MCF 10A (cell line): ENCODE measurements at regions of chr1 and their contacts with region 1.

Region 1: DNA sequence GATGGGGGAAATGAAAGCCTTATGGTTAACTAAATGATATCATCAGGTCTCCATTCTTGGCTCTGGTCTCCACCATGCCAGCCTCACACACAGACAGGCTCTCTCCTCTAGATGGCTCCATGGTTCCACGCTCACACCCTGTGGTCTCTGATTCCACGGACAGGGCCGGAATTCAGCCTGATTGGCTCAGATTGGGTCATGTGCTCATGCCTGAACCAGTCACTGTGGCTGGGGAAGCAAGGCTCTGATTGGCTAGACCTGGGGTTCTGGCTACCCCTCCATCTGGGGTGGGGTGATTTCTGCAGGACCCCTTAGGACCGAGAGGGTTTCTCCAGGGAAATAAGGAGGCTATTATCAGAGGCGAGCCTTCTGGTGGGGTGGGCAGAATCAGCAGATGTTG is 277.0 kb downstream of the PTPRU start:
- DNase-seq: peak; percentile 78
- H3K4me3 Mint-ChIP-seq: no peak overlapping the region
- H3K27ac Mint-ChIP-seq: no peak overlapping the region
- H3K4me1 Mint-ChIP-seq: no peaks in the 10 kb centered on the region
- H3K27me3 Mint-ChIP-seq: peaks cover 57% of the 10 kb centered on the region
- CTCF ChIP-seq: peak; percentile 86

Region 2: DNA sequence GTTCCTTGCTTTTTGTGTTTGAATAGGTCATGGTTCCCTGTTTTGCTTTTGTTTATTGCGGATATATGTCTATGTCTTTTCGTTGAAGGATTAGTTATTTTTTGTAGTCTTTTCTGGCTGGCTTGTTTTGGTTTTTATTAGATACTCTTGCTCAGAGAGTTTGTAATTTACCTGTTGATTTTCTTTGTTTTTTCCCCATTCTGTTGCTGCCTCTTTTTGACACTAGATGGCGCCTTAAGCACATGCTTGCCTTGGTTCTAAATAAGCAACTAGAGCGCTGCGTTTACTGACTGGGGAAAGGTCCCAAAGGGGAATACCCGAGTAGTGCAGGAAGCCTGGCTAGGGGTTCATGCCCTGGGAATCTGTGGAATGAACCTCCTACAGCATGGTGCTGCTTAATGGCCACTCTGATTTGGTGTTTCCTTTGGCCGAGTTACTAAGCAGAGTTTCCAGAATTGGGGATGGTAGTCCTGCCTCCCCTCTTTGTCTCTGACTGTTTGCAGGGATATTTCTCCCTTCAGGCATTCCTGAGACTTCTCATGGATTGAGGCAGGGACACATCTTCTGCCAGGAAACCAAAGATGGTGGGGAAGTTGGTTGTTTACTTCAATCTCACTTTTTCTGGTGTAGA is 133.8 kb before region 1 on chr1:
- CTCF ChIA-PET with region 1: no interaction called
- POLR2A ChIA-PET with region 1: no interaction called
- intact Hi-C with region 1: loop called (anchors 2 kb)
- DNase-seq: peak; percentile 44
- H3K4me3 Mint-ChIP-seq: no peak overlapping the region
- H3K27ac Mint-ChIP-seq: no peak overlapping the region
- H3K4me1 Mint-ChIP-seq: no peaks in the 10 kb centered on the region
- H3K27me3 Mint-ChIP-seq: peaks cover 29% of the 10 kb centered on the region
- CTCF ChIP-seq: peak; percentile 63

Region 3: DNA sequence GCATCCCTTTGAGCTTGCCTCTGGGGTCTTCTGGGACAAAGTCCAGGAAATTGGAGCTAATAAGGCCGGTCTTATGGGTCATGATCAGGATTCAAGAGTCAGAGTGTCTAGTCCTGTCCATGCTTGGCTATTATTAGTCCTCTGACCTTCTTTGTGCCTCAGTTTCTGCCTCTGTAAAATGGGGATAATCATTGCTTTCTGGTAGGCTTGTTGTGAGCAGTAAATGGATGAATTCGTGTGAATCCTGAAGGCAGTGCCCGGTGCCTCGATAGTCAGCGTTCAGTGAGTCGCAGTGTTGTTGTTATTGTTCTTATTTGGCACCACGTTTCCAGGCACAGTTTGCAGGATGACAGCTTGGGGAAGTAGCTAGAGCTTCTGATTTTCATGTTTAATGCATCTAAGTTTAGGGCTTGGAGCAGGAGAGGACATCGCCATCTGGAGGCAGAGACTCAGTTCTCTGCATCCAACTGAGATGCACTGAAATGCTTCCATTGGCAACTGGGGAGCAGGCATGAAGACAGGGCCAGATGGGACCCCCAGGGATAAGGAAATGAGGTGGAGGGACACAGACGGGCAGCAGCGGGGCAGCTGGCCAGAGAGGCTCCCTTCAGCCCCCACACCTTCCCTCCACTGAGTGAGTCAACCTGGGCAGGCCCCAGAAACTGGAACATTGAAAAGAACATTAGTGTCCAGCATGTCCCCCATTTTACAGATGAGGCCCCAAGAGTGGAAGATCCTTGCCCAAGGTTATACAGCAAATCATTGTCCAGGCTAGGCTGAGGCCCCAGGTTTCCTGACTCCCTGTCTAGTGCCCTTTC is 116.7 kb before region 1 on chr1:
- CTCF ChIA-PET with region 1: no interaction called
- POLR2A ChIA-PET with region 1: no interaction called
- intact Hi-C with region 1: no loop called
- DNase-seq: no peak
- H3K4me3 Mint-ChIP-seq: no peak overlapping the region
- H3K27ac Mint-ChIP-seq: no peak overlapping the region
- H3K4me1 Mint-ChIP-seq: peaks cover 14% of the 10 kb centered on the region
- H3K27me3 Mint-ChIP-seq: no peaks in the 10 kb centered on the region
- CTCF ChIP-seq: no peak

Region 4: GRCh38 chr1:29793101-29793546 is 279.8 kb after region 1 on chr1:
- CTCF ChIA-PET with region 1: interaction called, 3 read pairs
- POLR2A ChIA-PET with region 1: no interaction called
- intact Hi-C with region 1: loop called (anchors 1 kb)
- DNase-seq: peak; percentile 88
- H3K4me3 Mint-ChIP-seq: no peak overlapping the region
- H3K27ac Mint-ChIP-seq: no peak overlapping the region
- H3K4me1 Mint-ChIP-seq: peaks cover 5% of the 10 kb centered on the region
- H3K27me3 Mint-ChIP-seq: no peaks in the 10 kb centered on the region
- CTCF ChIP-seq: peak; percentile 70

Region 5: DNA sequence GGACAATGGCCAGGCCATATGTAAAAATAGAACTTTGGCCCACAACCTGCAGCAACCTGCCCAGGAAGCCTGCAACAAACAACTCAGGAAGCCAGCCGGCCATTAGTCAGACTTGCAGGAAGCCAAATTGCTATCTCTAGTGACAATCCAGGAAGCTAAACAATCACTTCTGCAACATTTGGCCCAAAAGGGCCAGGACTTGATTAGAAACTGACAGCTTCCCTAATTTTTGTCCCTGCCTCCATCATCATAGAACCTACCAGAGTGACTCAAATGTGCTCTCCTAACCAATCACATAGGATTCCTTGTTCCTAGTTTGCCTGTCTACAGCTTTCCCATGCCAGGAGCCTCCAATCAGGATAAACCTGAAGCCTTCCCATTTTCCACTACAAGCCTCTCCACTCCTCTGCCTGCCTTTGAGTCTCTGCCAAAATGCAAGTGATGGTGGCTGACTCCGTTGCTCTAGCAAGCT is 362.2 kb after region 1 on chr1:
- CTCF ChIA-PET with region 1: interaction called, 4 read pairs
- POLR2A ChIA-PET with region 1: interaction called, 3 read pairs
- intact Hi-C with region 1: loop called (anchors 1 kb)
- DNase-seq: peak; percentile 65
- H3K4me3 Mint-ChIP-seq: no peak overlapping the region
- H3K27ac Mint-ChIP-seq: no peak overlapping the region
- H3K4me1 Mint-ChIP-seq: peaks cover 6% of the 10 kb centered on the region
- H3K27me3 Mint-ChIP-seq: peaks cover 20% of the 10 kb centered on the region
- CTCF ChIP-seq: no peak

Region 6: DNA sequence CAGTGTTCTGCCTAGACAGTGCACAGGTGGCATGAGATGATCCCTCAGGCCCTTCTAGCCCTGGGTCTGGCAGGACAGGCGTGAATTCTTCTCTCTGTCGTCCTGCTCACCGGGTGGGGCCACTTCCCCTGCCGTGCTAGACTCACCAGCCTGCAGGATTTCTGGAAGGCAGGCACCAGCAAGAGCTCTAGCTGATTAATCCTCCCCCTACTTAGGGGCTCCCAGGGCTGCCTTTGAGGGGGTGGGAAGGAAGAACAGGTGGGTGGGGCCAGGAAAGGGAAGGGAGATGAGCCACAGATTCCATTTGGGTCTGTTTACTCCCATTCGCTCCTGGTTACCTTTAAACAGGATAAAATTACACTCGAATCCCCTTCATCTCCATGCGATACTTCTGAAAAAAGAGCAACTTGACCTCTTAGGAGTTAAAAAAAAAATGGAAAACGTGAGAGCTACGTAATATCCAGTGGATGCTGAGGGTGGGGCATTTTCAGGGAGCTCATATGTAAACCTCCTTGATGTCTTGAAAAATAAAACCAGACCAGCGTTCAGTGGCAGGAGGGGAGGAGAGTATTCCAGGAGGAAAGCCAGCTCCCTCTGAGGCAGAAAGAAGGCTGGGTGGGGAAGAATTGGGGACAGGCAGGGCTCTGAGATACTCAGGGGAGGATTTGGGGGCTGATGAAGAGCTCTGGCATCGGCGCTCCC is 388.4 kb after region 1 on chr1:
- CTCF ChIA-PET with region 1: no interaction called
- POLR2A ChIA-PET with region 1: no interaction called
- intact Hi-C with region 1: no loop called
- DNase-seq: no peak
- H3K4me3 Mint-ChIP-seq: no peak overlapping the region
- H3K27ac Mint-ChIP-seq: no peak overlapping the region
- H3K4me1 Mint-ChIP-seq: no peaks in the 10 kb centered on the region
- H3K27me3 Mint-ChIP-seq: peaks cover 89% of the 10 kb centered on the region
- CTCF ChIP-seq: no peak

Region 7: DNA sequence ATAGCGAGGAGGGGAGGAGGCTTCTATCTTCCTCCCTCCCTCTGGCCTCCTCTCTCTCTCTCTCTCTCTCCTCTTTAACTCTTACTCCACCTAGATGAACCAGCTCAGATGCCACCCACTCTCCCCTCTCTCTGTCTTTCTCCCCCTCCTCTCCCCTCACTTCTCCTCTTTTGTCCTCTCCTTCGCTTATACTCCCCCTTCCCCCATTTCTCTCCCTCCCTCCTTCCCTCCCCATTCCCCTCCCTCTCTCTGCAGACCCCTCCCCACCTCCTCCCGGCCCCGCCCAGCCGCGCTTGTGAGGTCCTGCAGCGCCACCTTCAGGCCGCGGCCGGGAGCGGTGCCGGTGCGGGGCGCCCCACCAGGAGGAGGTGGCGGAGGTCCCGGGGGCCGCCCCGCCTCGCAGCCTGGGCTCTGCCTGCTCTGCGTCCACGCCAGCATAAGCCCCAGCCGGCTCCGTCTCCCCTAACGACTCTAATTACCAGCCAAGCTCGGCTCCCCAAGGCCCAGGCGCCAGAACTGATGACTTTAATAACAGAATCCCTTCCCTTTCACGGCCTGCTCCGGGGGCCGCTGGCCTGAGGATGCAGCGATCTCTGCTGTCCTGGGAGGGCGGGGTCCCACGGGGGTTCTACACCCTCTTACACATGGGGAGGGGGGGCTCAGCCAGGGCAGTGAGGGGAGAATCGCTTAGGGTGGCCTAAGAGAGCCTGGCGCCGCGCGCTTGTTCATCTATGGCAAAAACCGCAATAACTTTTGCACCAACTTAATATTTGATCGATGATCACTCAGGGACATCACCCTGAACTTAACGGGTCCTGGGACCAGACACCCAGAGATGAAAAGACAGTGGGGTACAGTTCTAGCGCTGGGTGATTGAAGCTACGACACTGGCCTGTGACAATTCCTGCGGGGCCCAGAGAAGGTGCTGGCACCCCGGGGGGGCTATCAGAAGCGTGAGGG is 572.7 kb after region 1 on chr1:
- CTCF ChIA-PET with region 1: interaction called, 3 read pairs
- POLR2A ChIA-PET with region 1: no interaction called
- intact Hi-C with region 1: loop called (anchors 10 kb)
- DNase-seq: peak; percentile 15
- H3K4me3 Mint-ChIP-seq: no peak overlapping the region
- H3K27ac Mint-ChIP-seq: peak overlapping the region; percentile 50
- H3K4me1 Mint-ChIP-seq: peaks cover 17% of the 10 kb centered on the region
- H3K27me3 Mint-ChIP-seq: no peaks in the 10 kb centered on the region
- CTCF ChIP-seq: peak; percentile 80

Region 8: DNA sequence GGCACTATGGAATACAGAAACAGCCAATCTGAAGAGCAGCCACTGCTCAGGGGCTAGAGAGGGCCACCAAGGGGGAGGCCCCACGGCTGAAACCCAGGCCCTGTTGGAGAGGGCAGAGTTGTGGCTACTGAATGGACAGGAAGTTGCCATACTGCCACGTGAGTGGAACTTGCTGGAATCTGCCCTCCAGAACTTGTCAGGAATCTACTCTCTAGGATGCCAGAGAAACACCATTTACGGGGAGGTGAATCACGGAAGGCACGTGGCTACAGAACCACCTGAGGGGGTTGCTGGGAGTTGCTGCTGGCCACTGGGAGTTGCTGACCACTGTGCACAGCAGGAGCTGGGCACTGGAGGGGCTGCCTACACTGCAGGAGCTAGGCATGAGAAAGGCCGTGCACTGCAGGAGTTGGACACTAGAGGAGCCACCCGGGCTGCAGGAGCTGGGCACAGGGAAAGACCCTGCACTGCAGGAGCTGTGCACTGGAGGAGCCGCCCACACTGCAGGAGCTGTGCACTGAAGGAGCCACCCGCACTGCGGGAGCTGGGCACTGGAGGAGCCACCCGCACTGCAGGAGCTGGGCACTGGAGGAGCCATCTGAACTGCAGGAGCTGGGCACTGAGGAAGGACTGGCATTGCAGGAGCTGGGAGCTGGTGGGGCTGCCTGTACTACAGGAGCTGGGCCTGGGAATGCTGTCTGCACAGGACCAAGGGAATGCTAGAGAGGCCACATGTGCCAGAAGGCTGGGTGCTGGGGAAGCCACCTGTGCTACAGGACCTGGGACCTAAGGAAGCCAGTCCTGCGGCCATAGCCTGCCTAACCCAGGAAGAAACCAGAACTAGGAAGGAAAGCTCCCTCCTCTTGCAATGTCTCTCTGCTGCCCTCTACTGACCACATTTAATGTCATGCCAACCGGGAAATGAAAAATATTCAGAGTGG is 866.6 kb after region 1 on chr1:
- CTCF ChIA-PET with region 1: no interaction called
- POLR2A ChIA-PET with region 1: no interaction called
- intact Hi-C with region 1: loop called (anchors 1 kb)
- DNase-seq: peak; percentile 78
- H3K4me3 Mint-ChIP-seq: no peak overlapping the region
- H3K27ac Mint-ChIP-seq: no peak overlapping the region
- H3K4me1 Mint-ChIP-seq: peaks cover 12% of the 10 kb centered on the region
- H3K27me3 Mint-ChIP-seq: peaks cover 46% of the 10 kb centered on the region
- CTCF ChIP-seq: peak; percentile 69